CD4-positive, alpha-beta memory T cell (primary cell): ENCODE measurements at regions of chr18 and their contacts with region 1.

Region 1: DNA sequence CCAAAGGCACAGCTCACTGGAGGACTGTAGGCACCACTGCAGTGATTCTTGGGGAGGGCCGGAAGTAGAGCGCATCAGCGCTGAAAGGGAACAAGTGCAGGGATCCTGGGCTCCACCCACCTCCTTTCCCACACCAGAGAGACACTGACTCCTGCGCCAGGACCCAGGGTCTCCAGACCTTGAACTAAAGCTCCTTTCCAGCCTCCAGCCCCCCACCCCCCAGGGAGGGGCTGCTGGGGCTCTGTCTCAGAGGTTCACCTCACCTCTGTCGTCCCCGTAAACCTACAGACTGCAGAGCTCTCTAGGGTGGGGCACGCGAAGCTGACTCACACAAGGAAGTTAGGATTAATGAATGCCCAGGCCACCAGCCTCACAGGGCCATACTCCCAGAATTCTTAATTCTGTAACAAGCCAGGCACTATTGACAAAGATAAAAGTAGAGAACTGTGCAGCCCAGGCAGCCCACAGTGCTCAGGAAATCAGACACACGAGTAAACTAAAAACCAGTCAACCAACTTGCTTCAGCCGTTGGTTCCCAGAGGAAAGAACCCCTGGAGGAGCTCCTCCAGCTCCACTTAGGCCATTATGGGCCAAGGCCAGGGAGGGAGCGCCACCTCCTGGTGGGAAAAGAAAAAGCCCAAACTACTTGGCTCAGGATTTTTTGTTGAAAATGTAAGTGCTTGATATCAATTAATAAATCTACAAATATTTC is 45.1 kb upstream of the ACAA2 start:
- DNase-seq: peak in 4 of 5 donors; percentile 28 to 47 (median 44)
- H3K4me3 ChIP-seq: no peak overlapping the region
- H3K4me3 Mint-ChIP-seq: no peak overlapping the region
- H3K27ac ChIP-seq: no peak overlapping the region
- H3K27ac Mint-ChIP-seq: no peak overlapping the region
- H3K4me1 ChIP-seq: no peaks in the 10 kb centered on the region
- H3K4me1 Mint-ChIP-seq: no peaks in the 10 kb centered on the region
- H3K27me3 ChIP-seq: no peaks in the 10 kb centered on the region
- H3K27me3 Mint-ChIP-seq: peaks cover 0 to 2% of the 10 kb centered on the region in 2 donors

Region 2: DNA sequence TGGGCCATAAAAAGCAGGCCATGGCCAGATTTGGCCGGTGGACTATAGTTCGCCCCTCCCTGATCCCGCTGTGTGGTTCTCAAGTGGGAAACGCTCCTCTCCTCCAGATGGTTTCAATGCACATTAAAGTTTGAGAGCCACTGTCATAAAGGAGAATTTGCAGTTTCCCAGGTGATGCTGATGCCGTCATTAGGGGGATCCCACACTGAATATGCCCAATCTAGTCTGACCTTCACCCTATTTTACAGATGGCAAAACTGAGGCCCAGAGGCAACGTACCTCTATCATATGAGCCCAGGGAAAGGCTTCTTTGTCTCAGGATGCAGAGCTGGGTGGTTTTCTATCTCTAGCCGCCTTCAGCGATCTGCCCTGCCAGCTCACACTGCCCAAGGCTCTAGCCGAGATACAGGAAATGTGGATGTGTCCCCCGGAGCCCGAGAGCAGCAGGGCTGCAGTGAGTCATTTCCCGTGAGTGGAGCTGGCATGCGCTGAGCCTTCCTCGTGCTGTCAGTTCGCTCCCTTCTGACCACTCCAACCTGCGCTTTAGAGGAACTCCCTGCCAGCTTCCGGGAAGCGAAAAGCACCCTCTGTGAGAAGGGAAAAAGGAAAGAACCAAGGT is 1023.9 kb before region 1 on chr18:
- CTCF ChIA-PET with region 1: no interaction called
- POLR2A ChIA-PET with region 1: no interaction called
- intact Hi-C with region 1: no loop called
- DNase-seq: peak; percentile 58 to 90 (median 62)
- H3K4me3 ChIP-seq: peak overlapping the region; percentile 42 to 54
- H3K4me3 Mint-ChIP-seq: peak overlapping the region; percentile 81 to 98 (median 90)
- H3K27ac ChIP-seq: peak overlapping the region; percentile 74
- H3K27ac Mint-ChIP-seq: peak overlapping the region; percentile 90 to 97 (median 96)
- H3K4me1 ChIP-seq: peaks cover 100% of the 10 kb centered on the region
- H3K4me1 Mint-ChIP-seq: peaks cover 59 to 100% (median 79%) of the 10 kb centered on the region in 4 donors
- H3K27me3 ChIP-seq: no peaks in the 10 kb centered on the region
- H3K27me3 Mint-ChIP-seq: no peaks in the 10 kb centered on the region

Region 3: GRCh38 chr18:49206717-49207116 is 651.7 kb before region 1 on chr18:
- CTCF ChIA-PET with region 1: no interaction called
- POLR2A ChIA-PET with region 1: no interaction called
- intact Hi-C with region 1: no loop called
- DNase-seq: no peak
- H3K4me3 ChIP-seq: no peak overlapping the region
- H3K4me3 Mint-ChIP-seq: no peak overlapping the region
- H3K27ac ChIP-seq: no peak overlapping the region
- H3K27ac Mint-ChIP-seq: peak overlapping the region in 1 of 7 donors; percentile 26
- H3K4me1 ChIP-seq: no peaks in the 10 kb centered on the region
- H3K4me1 Mint-ChIP-seq: peaks cover 4 to 9% (median 6%) of the 10 kb centered on the region in 4 donors
- H3K27me3 ChIP-seq: no peaks in the 10 kb centered on the region
- H3K27me3 Mint-ChIP-seq: no peaks in the 10 kb centered on the region

Region 4: GRCh38 chr18:49464718-49465598 is 393.5 kb before region 1 on chr18:
- CTCF ChIA-PET with region 1: interaction called, 10 read pairs
- POLR2A ChIA-PET with region 1: no interaction called
- intact Hi-C with region 1: no loop called
- DNase-seq: no peak
- H3K4me3 ChIP-seq: no peak overlapping the region
- H3K4me3 Mint-ChIP-seq: no peak overlapping the region
- H3K27ac ChIP-seq: no peak overlapping the region
- H3K27ac Mint-ChIP-seq: no peak overlapping the region
- H3K4me1 ChIP-seq: peaks cover 9% of the 10 kb centered on the region
- H3K4me1 Mint-ChIP-seq: peaks cover 6 to 14% (median 9%) of the 10 kb centered on the region in 4 donors
- H3K27me3 ChIP-seq: no peaks in the 10 kb centered on the region
- H3K27me3 Mint-ChIP-seq: peaks cover 1 to 4% of the 10 kb centered on the region in 2 donors

Region 5: DNA sequence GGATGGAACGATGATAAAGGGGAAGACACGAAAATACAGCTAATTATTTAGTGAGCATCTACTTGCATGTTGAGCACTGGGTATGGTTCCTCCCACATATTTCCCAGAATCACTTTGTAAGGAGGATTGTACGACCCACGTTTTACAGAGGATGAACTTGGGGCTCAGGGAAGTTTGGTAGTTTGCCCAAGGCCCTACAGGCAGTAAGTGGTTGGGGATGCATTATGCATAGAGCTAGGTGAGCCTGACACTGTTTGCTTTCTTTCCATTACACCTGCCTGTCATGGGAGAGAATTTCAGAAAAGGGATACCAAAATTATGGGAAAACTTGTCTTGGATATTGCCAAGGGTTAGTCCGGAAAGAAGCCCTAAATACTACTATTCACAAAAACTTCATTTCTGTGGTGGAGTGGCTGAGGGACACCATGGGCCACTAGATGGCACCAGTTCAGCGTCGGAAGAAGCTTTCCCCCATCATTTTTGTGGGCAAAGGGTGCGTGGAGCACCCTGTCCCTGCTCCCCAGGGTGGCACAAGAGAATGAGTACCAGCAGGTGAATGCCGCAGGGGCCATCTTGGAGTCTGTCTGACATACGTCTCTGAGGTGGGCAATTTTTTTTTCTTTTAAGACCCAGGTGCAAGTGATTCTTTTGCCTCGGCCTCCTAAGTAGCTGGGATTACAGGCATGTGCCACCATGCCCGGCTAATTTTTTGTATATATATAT is 347.9 kb before region 1 on chr18:
- CTCF ChIA-PET with region 1: interaction called, 287 read pairs
- POLR2A ChIA-PET with region 1: no interaction called
- intact Hi-C with region 1: loop called (anchors 1 kb)
- DNase-seq: peak; percentile 46 to 60 (median 49)
- H3K4me3 ChIP-seq: no peak overlapping the region
- H3K4me3 Mint-ChIP-seq: no peak overlapping the region
- H3K27ac ChIP-seq: no peak overlapping the region
- H3K27ac Mint-ChIP-seq: no peak overlapping the region
- H3K4me1 ChIP-seq: no peaks in the 10 kb centered on the region
- H3K4me1 Mint-ChIP-seq: no peaks in the 10 kb centered on the region
- H3K27me3 ChIP-seq: no peaks in the 10 kb centered on the region
- H3K27me3 Mint-ChIP-seq: peaks cover 11 to 16% of the 10 kb centered on the region in 2 donors

Region 6: GRCh38 chr18:49561289-49562193 is 296.9 kb before region 1 on chr18 and contains the start of gene LIPG:
- CTCF ChIA-PET with region 1: interaction called, 52 read pairs
- POLR2A ChIA-PET with region 1: no interaction called
- intact Hi-C with region 1: loop called (anchors 1 kb)
- DNase-seq: peak; percentile 10 to 54 (median 27)
- H3K4me3 ChIP-seq: peak within 1 kb of the TSS in 1 of 2 donors; percentile 29
- H3K4me3 Mint-ChIP-seq: peak within 1 kb of the TSS; percentile 70 to 88 (median 78)
- H3K27ac ChIP-seq: no peak within 1 kb of the TSS
- H3K27ac Mint-ChIP-seq: peak within 1 kb of the TSS in 1 of 7 donors; percentile 36
- H3K4me1 ChIP-seq: peaks cover 23% of the 10 kb centered on the region
- H3K4me1 Mint-ChIP-seq: peaks cover 14 to 36% (median 22%) of the 10 kb centered on the region in 4 donors
- H3K27me3 ChIP-seq: peaks cover 25% of the 10 kb centered on the region
- H3K27me3 Mint-ChIP-seq: peaks cover 48 to 60% of the 10 kb centered on the region in 2 donors
- total RNA-seq, gene LIPG: not detected

Region 7: DNA sequence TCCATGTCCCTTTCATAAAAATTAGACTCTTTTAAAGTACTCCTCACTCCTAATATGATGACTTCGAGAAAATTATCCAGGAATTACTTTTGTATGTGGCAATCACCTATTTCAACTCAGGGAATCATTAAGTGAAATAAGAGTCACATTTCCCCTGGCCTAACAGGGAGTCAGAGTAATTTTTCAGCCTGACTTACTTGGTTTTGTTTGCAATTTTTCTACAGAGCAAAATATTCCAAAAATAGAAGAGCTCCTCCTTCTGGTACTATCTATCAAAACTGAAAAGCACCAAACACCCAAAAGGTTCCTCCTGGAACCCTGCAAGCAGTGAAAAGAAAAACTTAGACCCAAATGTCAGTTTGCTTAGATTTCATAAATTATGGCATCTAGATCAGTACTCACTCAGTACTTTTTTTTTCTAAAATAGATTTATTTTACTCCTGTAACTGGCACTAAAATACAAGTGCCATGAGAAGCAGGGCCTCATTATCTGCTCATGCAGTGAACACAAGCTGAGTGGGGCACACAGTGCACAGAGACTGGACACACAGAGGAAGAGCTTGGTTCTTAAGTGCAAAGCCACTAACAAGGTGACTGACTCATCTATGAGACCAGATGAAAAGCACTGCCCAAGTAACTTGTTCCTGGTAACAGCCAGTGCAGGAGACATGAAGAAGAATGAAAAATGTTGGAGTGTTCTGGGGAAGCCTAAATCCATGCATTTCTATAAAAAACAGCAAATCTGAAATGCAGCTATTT is 73.9 kb before region 1 on chr18:
- CTCF ChIA-PET with region 1: interaction called, 10 read pairs
- POLR2A ChIA-PET with region 1: no interaction called
- intact Hi-C with region 1: no loop called
- DNase-seq: peak in 1 of 5 donors; percentile 43
- H3K4me3 ChIP-seq: no peak overlapping the region
- H3K4me3 Mint-ChIP-seq: peak overlapping the region in 3 of 8 donors; percentile 40 to 71 (median 53)
- H3K27ac ChIP-seq: no peak overlapping the region
- H3K27ac Mint-ChIP-seq: peak overlapping the region in 5 of 7 donors; percentile 7 to 73 (median 25)
- H3K4me1 ChIP-seq: peaks cover 54% of the 10 kb centered on the region
- H3K4me1 Mint-ChIP-seq: peaks cover 30 to 55% (median 43%) of the 10 kb centered on the region in 4 donors
- H3K27me3 ChIP-seq: no peaks in the 10 kb centered on the region
- H3K27me3 Mint-ChIP-seq: no peaks in the 10 kb centered on the region

Region 8: DNA sequence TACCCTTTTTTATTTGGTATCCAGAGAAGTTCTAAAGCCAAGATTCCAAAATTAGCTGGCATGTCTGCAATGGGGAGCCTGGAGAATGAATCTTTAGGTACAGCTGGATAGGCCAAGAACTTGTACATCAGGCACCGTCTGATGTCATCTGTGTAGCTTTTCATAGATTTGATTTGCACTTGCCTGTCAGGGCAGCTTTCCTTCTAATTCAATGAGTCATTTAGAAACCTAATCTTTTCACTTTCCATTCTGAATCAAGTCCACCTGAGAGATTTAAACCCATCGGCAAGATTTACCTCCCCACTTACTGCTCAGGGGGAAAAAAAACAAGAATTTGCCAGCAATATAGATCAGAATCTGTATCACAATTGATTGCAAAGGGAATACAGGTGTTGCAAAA is 15.8 kb after region 1 on chr18:
- CTCF ChIA-PET with region 1: interaction called, 13 read pairs
- POLR2A ChIA-PET with region 1: no interaction called
- intact Hi-C with region 1: no loop called
- DNase-seq: no peak
- H3K4me3 ChIP-seq: no peak overlapping the region
- H3K4me3 Mint-ChIP-seq: no peak overlapping the region
- H3K27ac ChIP-seq: no peak overlapping the region
- H3K27ac Mint-ChIP-seq: no peak overlapping the region
- H3K4me1 ChIP-seq: no peaks in the 10 kb centered on the region
- H3K4me1 Mint-ChIP-seq: no peaks in the 10 kb centered on the region
- H3K27me3 ChIP-seq: no peaks in the 10 kb centered on the region
- H3K27me3 Mint-ChIP-seq: peaks cover 4 to 17% of the 10 kb centered on the region in 2 donors

Region 9: DNA sequence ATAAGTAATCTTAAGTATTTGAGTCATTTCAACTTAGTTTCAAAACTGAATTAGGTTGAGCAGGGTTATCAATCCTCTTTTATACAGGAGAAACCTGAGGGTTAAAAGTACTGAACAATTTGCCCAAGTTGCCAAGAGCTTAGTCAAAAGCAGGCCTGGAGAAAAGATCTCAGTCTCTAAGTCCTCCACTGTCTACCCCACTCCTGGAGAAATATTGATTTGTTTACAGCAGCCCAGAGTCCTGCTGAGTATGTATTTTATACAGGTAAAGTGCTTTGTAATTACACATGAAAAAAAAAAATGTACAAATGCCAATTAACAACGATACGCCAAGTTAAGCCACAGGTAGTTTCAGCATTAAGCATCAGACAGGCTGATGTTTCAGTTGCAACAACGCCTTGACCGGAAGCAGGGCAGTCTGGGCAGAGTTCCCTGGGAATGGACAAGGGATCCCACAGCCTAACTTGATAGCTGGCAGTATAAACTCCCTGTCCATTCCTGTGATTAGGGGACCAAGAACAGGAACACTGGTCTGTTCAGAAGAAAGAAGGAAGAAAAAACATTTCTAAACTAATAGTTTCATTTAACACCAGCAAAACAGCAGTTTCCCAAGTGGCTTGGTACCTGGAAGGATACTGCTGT is 203.5 kb after region 1 on chr18:
- CTCF ChIA-PET with region 1: no interaction called
- POLR2A ChIA-PET with region 1: no interaction called
- intact Hi-C with region 1: no loop called
- DNase-seq: no peak
- H3K4me3 ChIP-seq: no peak overlapping the region
- H3K4me3 Mint-ChIP-seq: no peak overlapping the region
- H3K27ac ChIP-seq: no peak overlapping the region
- H3K27ac Mint-ChIP-seq: no peak overlapping the region
- H3K4me1 ChIP-seq: no peaks in the 10 kb centered on the region
- H3K4me1 Mint-ChIP-seq: no peaks in the 10 kb centered on the region
- H3K27me3 ChIP-seq: no peaks in the 10 kb centered on the region
- H3K27me3 Mint-ChIP-seq: peaks cover 7 to 18% of the 10 kb centered on the region in 2 donors